ENCODE measurements at regions of chr18 and their contacts with region 1.

Region 1: GRCh38 chr18:21064347-21064746 is 47.3 kb downstream of the ROCK1 start:
- DNase-seq: no peak
- H3K4me3 Mint-ChIP-seq: no peak overlapping the region
- H3K27ac Mint-ChIP-seq: no peak overlapping the region
- H3K4me1 Mint-ChIP-seq: no peaks in the 10 kb centered on the region
- H3K27me3 Mint-ChIP-seq: no peaks in the 10 kb centered on the region
- CTCF ChIP-seq: no peak

Region 2: GRCh38 chr18:21100146-21100545 is 35.8 kb after region 1 on chr18:
- CTCF ChIA-PET with region 1: no interaction called
- intact Hi-C with region 1: loop called (anchors 5 kb)
- DNase-seq: no peak
- H3K4me3 Mint-ChIP-seq: no peak overlapping the region
- H3K27ac Mint-ChIP-seq: no peak overlapping the region
- H3K4me1 Mint-ChIP-seq: peaks cover 26% of the 10 kb centered on the region
- H3K27me3 Mint-ChIP-seq: no peaks in the 10 kb centered on the region
- CTCF ChIP-seq: no peak